Tibial artery (tissue), 4 donors: ENCODE measurements at regions of chr1 and their contacts with region 1.

Region 1: GRCh38 chr1:61084491-61085031 is 2.2 kb downstream of the NFIA start:
- DNase-seq: no peak
- H3K4me3 ChIP-seq: peak overlapping the region; percentile 88 to 95
- H3K27ac ChIP-seq: peak overlapping the region; percentile 99
- H3K4me1 ChIP-seq: peaks cover 0 to 57% (median 18%) of the 10 kb centered on the region in 4 donors
- H3K27me3 ChIP-seq: no peaks in the 10 kb centered on the region
- CTCF ChIP-seq: no peak

Region 2: DNA sequence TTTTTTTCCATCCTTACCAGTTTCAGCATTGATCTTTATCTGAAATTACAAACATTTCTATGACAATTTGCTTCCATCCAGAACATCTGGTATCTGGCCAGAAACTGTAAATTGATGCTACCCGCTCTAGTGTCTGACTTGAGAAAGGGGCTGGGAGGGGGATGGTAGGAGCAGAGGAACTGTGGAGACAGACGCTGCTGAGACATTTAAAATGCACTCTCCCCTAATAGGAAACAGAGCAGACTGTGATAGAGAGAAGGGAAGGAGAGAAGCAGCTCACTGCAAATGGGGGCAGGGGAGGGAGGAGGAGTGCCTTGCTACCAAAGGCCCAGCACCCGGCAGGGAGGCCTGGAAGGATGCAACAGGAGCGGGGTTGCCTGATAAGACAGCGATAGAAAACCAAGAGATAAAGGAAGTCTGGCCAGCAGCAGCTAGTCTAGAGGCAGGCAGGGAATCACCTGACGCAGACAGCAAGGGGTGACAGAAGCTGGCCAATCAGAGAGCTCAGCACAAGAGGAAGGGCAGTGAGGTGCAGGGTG is 197.7 kb before region 1 on chr1:
- intact Hi-C with region 1: no loop called
- DNase-seq: no peak
- H3K4me3 ChIP-seq: no peak overlapping the region
- H3K27ac ChIP-seq: no peak overlapping the region
- H3K4me1 ChIP-seq: no peaks in the 10 kb centered on the region
- H3K27me3 ChIP-seq: no peaks in the 10 kb centered on the region
- CTCF ChIP-seq: no peak

Region 3: GRCh38 chr1:61190618-61191432 is 106.3 kb after region 1 on chr1:
- intact Hi-C with region 1: loop called (anchors 5 kb)
- DNase-seq: no peak
- H3K4me3 ChIP-seq: peak overlapping the region in 1 of 2 donors; percentile 6
- H3K27ac ChIP-seq: peak overlapping the region; percentile 72 to 84
- H3K4me1 ChIP-seq: peaks cover 0 to 95% (median 44%) of the 10 kb centered on the region in 4 donors
- H3K27me3 ChIP-seq: no peaks in the 10 kb centered on the region
- CTCF ChIP-seq: no peak